CD8-positive, alpha-beta T cell (primary cell): ENCODE measurements at regions of chr14 and their contacts with region 1.

Region 1: DNA sequence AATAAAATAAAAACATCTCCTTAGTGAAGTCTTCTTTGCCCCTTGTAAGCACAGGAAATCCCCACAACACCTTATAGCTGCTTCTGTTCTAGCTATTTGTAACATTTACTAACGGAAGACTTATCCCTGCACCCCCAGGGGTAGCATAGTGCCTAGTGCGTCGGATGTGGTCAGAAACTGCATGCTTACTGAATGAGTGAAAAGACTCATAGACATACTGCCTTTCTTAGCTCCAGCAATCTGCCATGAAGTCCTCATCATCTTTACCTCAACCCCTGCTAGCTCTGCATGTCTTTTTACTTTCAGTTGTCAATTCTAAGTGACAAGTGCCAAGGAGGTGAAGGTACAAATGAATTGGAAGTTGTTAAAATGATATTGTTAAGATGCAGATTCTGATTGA is 12.9 kb downstream of the RIOX1 start:
- DNase-seq: peak in 3 of 9 experiments; percentile 29 to 55 (median 40)
- ATAC-seq: peak; percentile 82
- H3K4me3 ChIP-seq: no peak overlapping the region
- H3K4me3 Mint-ChIP-seq: no peak overlapping the region
- H3K27ac ChIP-seq: peak overlapping the region in 1 of 2 experiments; percentile 6
- H3K27ac Mint-ChIP-seq: no peak overlapping the region
- H3K4me1 ChIP-seq: no peaks in the 10 kb centered on the region
- H3K4me1 Mint-ChIP-seq: peaks cover 4% of the 10 kb centered on the region
- H3K27me3 ChIP-seq: no peaks in the 10 kb centered on the region
- H3K27me3 Mint-ChIP-seq: no peaks in the 10 kb centered on the region
- CTCF ChIP-seq: no peak

Region 2: DNA sequence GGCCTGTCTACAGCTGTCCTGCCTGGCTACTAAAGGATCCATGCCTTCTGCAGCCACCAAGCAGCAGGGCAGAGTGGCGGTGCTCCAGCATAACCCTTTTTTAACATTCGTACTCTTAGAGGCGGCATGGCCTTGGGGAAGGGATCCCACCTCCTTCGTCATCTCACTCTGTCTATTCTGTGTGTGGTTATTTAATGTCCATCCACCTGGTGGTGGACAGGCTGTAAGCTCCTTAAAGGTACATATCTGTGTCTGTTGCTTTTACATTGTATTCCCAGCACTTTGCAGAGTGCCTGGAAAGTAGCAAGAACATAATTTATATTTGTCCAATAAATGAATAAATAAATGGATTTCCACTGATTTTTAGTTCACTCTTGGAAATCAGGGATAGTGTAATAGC is 17.6 kb after region 1 on chr14:
- CTCF ChIA-PET with region 1: interaction called, 35 read pairs
- POLR2A ChIA-PET with region 1: no interaction called
- intact Hi-C with region 1: no loop called
- DNase-seq: no peak
- ATAC-seq: no peak
- H3K4me3 ChIP-seq: no peak overlapping the region
- H3K4me3 Mint-ChIP-seq: no peak overlapping the region
- H3K27ac ChIP-seq: no peak overlapping the region
- H3K27ac Mint-ChIP-seq: no peak overlapping the region
- H3K4me1 ChIP-seq: no peaks in the 10 kb centered on the region
- H3K4me1 Mint-ChIP-seq: no peaks in the 10 kb centered on the region
- H3K27me3 ChIP-seq: no peaks in the 10 kb centered on the region
- H3K27me3 Mint-ChIP-seq: no peaks in the 10 kb centered on the region
- CTCF ChIP-seq: no peak

Region 3: DNA sequence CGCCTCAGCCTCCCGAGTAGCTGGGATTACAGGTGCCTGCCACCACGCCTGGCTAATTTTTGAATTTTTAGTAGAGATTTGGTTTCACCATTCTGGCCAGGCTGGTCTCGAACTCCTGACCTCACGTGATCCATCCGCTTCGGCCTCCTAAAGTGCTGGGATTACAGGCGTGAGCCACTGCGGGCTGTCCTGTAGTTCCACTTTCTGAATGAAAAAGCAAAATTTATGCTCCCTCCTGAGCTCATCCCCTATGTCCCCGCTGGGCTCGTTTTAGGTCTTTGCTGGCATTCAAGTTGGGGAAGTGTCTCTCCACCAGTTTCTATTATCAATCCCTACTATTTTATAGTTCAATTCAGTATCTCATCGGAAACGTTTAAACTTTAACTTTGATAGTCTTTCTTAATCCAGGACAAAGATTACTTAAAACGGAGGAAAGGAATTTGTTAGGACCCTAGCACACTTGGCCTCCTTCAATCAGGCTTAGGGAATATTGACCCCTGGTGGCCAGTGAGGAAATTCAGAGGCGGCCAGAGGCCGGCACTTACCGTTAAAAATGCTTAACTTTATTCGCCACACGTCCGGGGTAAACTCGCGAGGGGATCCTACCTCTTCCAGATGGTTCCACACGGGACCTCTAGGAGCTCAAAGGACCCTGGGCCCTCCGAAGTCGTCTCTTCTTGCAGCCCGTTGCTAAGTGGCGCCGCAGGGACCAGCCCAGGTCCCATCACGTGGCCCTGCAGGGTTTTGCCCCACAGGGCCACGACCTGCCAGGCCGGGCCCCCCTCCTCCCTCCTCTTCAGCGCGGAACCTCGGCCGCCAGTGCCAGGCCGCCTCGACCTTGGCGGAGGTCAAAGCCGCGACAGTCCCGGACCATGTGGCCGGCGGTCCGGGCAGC is 129.7 kb after region 1 on chr14:
- CTCF ChIA-PET with region 1: interaction called, 49 read pairs
- POLR2A ChIA-PET with region 1: no interaction called
- intact Hi-C with region 1: loop called in 1 of 2 experiments (anchors 1 kb)
- DNase-seq: peak; percentile 21 to 78 (median 60)
- ATAC-seq: peak; percentile 87
- H3K4me3 ChIP-seq: peak overlapping the region; percentile 56 to 59
- H3K4me3 Mint-ChIP-seq: peak overlapping the region; percentile 83
- H3K27ac ChIP-seq: no peak overlapping the region
- H3K27ac Mint-ChIP-seq: no peak overlapping the region
- H3K4me1 ChIP-seq: peaks cover 8% of the 10 kb centered on the region
- H3K4me1 Mint-ChIP-seq: peaks cover 6% of the 10 kb centered on the region
- H3K27me3 ChIP-seq: no peaks in the 10 kb centered on the region
- H3K27me3 Mint-ChIP-seq: peaks cover 8% of the 10 kb centered on the region
- CTCF ChIP-seq: peak; percentile 72

Region 4: DNA sequence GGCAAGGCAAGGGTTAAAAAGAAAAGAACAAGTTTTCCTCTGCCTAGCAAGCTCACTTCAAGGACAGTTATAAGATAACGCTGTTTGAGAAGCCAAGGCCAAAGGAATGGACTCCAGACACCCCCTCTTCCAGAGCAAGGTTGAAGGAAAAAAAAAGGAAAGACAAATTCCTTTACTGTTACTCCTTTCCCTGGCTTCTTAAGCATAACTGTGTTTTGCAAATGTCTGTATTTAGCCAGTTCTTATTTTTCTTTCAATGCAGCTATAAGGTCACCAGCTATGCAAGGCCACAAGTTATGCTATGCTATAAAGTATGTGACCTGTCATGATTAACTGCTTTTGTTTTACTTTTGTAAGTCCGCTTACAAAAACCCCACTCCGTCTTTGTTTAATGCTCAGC is 409.6 kb after region 1 on chr14:
- CTCF ChIA-PET with region 1: no interaction called
- POLR2A ChIA-PET with region 1: no interaction called
- intact Hi-C with region 1: no loop called
- DNase-seq: no peak
- ATAC-seq: no peak
- H3K4me3 ChIP-seq: no peak overlapping the region
- H3K4me3 Mint-ChIP-seq: no peak overlapping the region
- H3K27ac ChIP-seq: no peak overlapping the region
- H3K27ac Mint-ChIP-seq: no peak overlapping the region
- H3K4me1 ChIP-seq: no peaks in the 10 kb centered on the region
- H3K4me1 Mint-ChIP-seq: peaks cover 8% of the 10 kb centered on the region
- H3K27me3 ChIP-seq: no peaks in the 10 kb centered on the region
- H3K27me3 Mint-ChIP-seq: no peaks in the 10 kb centered on the region
- CTCF ChIP-seq: no peak

Region 5: DNA sequence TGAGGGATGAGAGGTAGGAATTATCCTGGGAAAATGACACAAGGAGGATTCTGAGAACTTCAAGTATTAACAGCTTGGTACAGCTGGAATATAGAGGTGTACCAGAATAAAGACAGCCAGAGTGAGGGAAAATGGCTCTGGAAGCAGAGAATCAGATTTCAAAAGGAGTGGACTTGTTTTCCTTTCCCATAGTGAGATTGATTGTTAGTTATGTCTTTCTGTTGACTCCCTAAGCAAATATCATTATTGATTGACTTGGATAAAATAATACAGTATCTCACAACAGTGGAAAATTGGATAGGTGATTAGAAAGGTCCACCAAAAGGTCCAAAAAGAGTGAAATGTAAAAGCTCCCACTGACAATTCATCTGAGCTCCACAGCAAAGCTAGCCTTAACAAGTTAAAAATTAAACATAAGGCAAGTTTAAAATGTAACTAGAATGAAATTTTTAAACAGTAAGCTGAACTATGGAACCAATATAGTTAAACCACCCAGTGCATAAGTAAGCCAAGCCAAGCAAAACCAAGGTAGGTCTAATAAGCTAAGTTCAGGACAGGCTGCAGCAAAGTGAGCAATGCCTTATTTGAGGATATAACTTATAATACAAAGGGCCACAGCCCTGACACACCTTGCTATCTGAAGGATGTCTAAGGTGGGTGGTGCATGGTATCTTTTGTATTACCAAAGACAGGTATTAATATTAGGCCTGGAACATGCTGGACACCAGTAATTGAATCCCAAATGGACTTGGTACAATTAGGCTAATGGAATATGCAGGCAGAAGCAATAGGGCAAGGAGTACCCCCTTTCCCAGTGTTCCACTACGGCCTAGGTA is 493.7 kb after region 1 on chr14:
- CTCF ChIA-PET with region 1: no interaction called
- POLR2A ChIA-PET with region 1: no interaction called
- intact Hi-C with region 1: no loop called
- DNase-seq: no peak
- ATAC-seq: no peak
- H3K4me3 ChIP-seq: no peak overlapping the region
- H3K4me3 Mint-ChIP-seq: no peak overlapping the region
- H3K27ac ChIP-seq: no peak overlapping the region
- H3K27ac Mint-ChIP-seq: no peak overlapping the region
- H3K4me1 ChIP-seq: no peaks in the 10 kb centered on the region
- H3K4me1 Mint-ChIP-seq: no peaks in the 10 kb centered on the region
- H3K27me3 ChIP-seq: no peaks in the 10 kb centered on the region
- H3K27me3 Mint-ChIP-seq: no peaks in the 10 kb centered on the region
- CTCF ChIP-seq: no peak

Region 6: DNA sequence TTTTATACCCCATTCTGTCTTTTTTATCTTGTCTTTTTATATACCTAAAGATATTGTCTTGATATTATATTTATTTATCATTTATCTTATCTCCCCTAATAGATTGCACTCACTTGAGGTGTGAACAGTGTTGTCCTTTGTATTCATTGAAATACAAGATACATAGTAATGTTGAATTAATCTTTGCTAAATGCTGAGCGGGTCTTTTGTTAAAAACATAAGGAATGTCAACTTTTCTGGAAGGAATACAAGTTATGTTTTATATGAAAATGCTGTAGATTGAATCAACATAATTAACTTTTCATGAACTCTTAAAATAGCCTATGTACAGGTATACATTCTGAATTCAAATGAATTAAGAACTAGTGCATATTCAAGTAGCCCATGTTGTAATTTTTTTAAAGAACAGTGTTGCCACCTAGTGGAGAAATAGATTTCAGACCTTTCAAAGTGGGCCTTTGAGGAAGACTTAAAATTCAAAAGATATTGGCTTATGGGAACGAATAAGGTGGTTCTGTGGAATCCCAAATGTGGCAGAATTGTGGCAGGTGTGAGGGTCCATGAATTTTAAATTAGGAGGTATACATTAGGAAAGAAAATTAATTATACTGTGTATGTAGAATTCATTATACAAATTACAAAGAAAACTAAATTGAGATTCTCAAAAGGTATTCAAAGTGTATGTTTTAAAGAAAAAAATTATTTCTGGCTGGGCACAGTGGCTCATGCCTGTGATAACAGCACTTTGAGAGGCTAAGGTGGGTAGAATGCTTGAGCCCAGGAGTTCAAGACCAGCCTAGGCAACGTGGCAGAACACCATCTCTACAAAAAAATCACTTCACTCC is 534.6 kb after region 1 on chr14:
- CTCF ChIA-PET with region 1: no interaction called
- POLR2A ChIA-PET with region 1: no interaction called
- intact Hi-C with region 1: loop called in 1 of 2 experiments (anchors 10 kb)
- DNase-seq: peak in 2 of 9 experiments; percentile 58 to 69
- ATAC-seq: peak; percentile 58
- H3K4me3 ChIP-seq: no peak overlapping the region
- H3K4me3 Mint-ChIP-seq: no peak overlapping the region
- H3K27ac ChIP-seq: no peak overlapping the region
- H3K27ac Mint-ChIP-seq: no peak overlapping the region
- H3K4me1 ChIP-seq: no peaks in the 10 kb centered on the region
- H3K4me1 Mint-ChIP-seq: no peaks in the 10 kb centered on the region
- H3K27me3 ChIP-seq: no peaks in the 10 kb centered on the region
- H3K27me3 Mint-ChIP-seq: no peaks in the 10 kb centered on the region
- CTCF ChIP-seq: peak; percentile 88